Psoas muscle (tissue), 8 donors: ENCODE measurements at regions of chr5 and their contacts with region 1.

Region 1: GRCh38 chr5:6704361-6704851 is 8.8 kb upstream of the TENT4A start:
- DNase-seq: peak; percentile 65 to 88
- ATAC-seq: peak; percentile 90 to 99 (median 98)
- H3K4me3 ChIP-seq: peak overlapping the region; percentile 3
- H3K27ac ChIP-seq: peak overlapping the region; percentile 84
- H3K4me1 ChIP-seq: peaks cover 23% of the 10 kb centered on the region
- H3K27me3 ChIP-seq: no peaks in the 10 kb centered on the region
- CTCF ChIP-seq: no peak

Region 2: GRCh38 chr5:6745706-6746222 is 41.4 kb after region 1 on chr5:
- intact Hi-C with region 1: loop called in 1 of 2 experiments (anchors 1 kb)
- DNase-seq: no peak
- ATAC-seq: peak; percentile 54 to 88 (median 75)
- H3K4me3 ChIP-seq: no peak overlapping the region
- H3K27ac ChIP-seq: peak overlapping the region; percentile 14
- H3K4me1 ChIP-seq: peaks cover 6% of the 10 kb centered on the region
- H3K27me3 ChIP-seq: no peaks in the 10 kb centered on the region
- CTCF ChIP-seq: peak; percentile 76